Naive thymus-derived CD4-positive, alpha-beta T cell (primary cell): ENCODE measurements at regions of chr12 and their contacts with region 1.

Region 1: GRCh38 chr12:47397664-47398281 is 308.1 kb downstream of the RPAP3 start:
- DNase-seq: peak in 8 of 9 donors; percentile 33 to 71 (median 54)
- ATAC-seq: peak; percentile 86
- H3K4me3 ChIP-seq: peak overlapping the region; percentile 20
- H3K4me3 Mint-ChIP-seq: peak overlapping the region; percentile 29 to 73 (median 64)
- H3K27ac ChIP-seq: no peak overlapping the region
- H3K27ac Mint-ChIP-seq: peak overlapping the region; percentile 61 to 98 (median 91)
- H3K4me1 ChIP-seq: peaks cover 41% of the 10 kb centered on the region in 2 donors
- H3K4me1 Mint-ChIP-seq: peaks cover 28 to 76% (median 52%) of the 10 kb centered on the region in 7 donors
- H3K27me3 ChIP-seq: no peaks in the 10 kb centered on the region
- H3K27me3 Mint-ChIP-seq: no peaks in the 10 kb centered on the region

Region 2: GRCh38 chr12:47147739-47148138 is 250.0 kb before region 1 on chr12:
- CTCF ChIA-PET with region 1: no interaction called
- POLR2A ChIA-PET with region 1: interaction called, 3 read pairs
- intact Hi-C with region 1: loop called in 1 of 2 experiments (anchors 5 kb)
- DNase-seq: no peak
- ATAC-seq: no peak
- H3K4me3 ChIP-seq: no peak overlapping the region
- H3K4me3 Mint-ChIP-seq: no peak overlapping the region
- H3K27ac ChIP-seq: no peak overlapping the region
- H3K27ac Mint-ChIP-seq: peak overlapping the region in 2 of 9 donors; percentile 24 to 86
- H3K4me1 ChIP-seq: peaks cover 0 to 11% of the 10 kb centered on the region in 2 donors
- H3K4me1 Mint-ChIP-seq: peaks cover 14 to 50% (median 36%) of the 10 kb centered on the region in 7 donors
- H3K27me3 ChIP-seq: no peaks in the 10 kb centered on the region
- H3K27me3 Mint-ChIP-seq: no peaks in the 10 kb centered on the region

Region 3: DNA sequence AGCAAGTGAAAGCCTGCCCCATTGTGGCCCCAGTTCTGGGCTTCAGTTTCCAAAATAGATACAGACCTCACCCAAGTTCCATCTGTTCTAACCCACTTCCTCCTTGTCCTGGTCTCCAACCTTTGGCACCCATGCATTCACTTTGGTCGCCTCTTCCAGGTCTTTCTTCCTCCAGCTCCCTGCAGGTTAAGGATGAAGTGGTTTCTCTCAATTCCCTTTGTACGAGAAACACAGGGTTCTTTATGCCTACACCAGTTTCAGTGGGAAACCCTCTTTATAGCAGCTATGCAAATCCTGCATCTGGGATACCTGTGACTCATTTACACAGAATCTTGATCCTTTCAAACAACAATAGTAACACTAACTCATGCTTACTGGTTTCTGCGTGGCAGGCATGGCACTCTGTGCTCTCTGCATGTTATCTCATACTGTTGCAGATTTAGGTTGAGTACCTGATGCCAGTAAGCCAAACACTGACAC is 207.5 kb before region 1 on chr12:
- CTCF ChIA-PET with region 1: interaction called, 13 read pairs
- POLR2A ChIA-PET with region 1: interaction called, 6 read pairs
- intact Hi-C with region 1: loop called (anchors 1 to 2 kb)
- DNase-seq: no peak
- ATAC-seq: no peak
- H3K4me3 ChIP-seq: no peak overlapping the region
- H3K4me3 Mint-ChIP-seq: peak overlapping the region; percentile 42 to 87 (median 76)
- H3K27ac ChIP-seq: peak overlapping the region; percentile 61
- H3K27ac Mint-ChIP-seq: peak overlapping the region; percentile 81 to 98 (median 93)
- H3K4me1 ChIP-seq: peaks cover 52 to 77% of the 10 kb centered on the region in 2 donors
- H3K4me1 Mint-ChIP-seq: peaks cover 69 to 98% (median 93%) of the 10 kb centered on the region in 7 donors
- H3K27me3 ChIP-seq: no peaks in the 10 kb centered on the region
- H3K27me3 Mint-ChIP-seq: no peaks in the 10 kb centered on the region

Region 4: DNA sequence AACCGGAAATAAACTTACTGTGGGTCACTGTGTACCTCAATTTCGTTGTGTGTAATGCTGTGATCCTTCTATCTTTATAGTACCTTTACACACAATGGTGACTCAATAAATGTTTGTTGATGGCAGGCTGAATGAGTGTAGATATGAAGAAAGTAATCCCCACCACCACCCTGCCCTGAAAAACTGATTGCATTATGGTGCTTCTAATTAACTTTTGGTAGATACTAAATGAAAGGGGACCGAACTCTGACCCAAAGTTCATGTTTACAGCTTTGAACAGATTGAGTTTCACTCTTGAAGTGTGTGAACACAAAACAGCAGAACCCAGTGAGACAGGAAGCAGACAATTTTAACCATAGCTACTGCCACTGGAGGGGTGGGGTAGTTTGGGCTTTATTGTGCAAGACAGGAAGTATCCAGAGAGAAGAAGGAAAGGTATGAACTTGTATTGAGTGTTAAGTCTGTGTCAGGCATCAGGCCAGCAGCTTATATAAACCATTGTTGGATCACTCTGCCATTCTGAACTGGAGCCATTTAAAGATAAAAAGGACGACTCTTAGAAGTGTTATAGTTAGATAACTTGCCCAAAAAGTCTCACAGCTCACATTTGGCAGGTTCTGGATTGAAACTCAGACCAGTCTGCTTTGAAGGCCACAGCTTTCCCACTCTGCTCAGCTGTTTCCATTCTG is 121.0 kb before region 1 on chr12:
- CTCF ChIA-PET with region 1: interaction called, 6 read pairs
- POLR2A ChIA-PET with region 1: interaction called, 8 read pairs
- intact Hi-C with region 1: loop called in 1 of 2 experiments (anchors 1 kb)
- DNase-seq: peak; percentile 12 to 89 (median 84)
- ATAC-seq: peak; percentile 97
- H3K4me3 ChIP-seq: peak overlapping the region; percentile 31
- H3K4me3 Mint-ChIP-seq: peak overlapping the region; percentile 51 to 83 (median 74)
- H3K27ac ChIP-seq: peak overlapping the region; percentile 69
- H3K27ac Mint-ChIP-seq: peak overlapping the region; percentile 90 to 98 (median 92)
- H3K4me1 ChIP-seq: peaks cover 28 to 73% of the 10 kb centered on the region in 2 donors
- H3K4me1 Mint-ChIP-seq: peaks cover 42 to 97% (median 90%) of the 10 kb centered on the region in 7 donors
- H3K27me3 ChIP-seq: no peaks in the 10 kb centered on the region
- H3K27me3 Mint-ChIP-seq: no peaks in the 10 kb centered on the region

Region 5: DNA sequence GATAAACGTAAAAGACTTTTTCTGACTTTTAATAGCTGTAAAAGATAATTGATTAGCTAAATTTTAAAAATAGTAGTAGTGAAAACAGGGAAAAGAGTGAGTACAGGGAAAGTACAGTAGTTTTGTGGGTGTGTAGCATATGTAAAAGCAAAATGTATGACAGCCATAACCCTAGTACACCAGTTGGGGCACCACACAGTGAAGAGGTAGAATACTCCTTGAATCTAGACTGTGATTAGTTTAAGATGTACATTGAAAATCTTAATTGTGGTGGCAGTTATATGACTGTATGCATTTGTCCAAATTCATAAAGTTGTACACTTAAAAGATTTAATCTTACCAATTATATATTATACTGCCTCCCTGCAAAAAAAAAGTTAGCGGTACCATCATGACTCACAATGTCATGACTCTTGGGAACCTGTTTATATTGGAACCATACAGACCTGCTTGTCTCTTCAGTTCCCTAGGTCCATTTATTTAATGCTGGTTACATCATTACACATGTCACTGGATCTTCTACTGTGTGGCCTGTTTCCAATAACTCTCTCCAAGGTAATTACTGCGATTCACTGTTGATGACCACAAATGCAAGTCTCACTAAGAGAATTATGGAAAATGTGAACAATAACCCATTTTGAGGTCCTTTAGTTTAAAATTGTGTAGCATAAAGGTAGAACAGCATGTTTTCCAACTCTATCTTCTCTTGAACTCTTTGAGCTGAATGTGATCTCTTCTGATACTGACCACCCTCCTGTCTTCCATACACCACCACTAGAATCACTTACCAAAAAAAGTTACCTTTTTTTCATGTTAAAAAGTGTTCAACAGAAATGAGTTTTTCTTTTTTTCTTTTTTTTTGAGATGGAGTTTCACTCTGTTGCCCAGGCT is 53.9 kb before region 1 on chr12:
- CTCF ChIA-PET with region 1: interaction called, 4 read pairs
- POLR2A ChIA-PET with region 1: no interaction called
- intact Hi-C with region 1: loop called in 1 of 2 experiments (anchors 10 kb)
- DNase-seq: no peak
- ATAC-seq: no peak
- H3K4me3 ChIP-seq: no peak overlapping the region
- H3K4me3 Mint-ChIP-seq: no peak overlapping the region
- H3K27ac ChIP-seq: no peak overlapping the region
- H3K27ac Mint-ChIP-seq: no peak overlapping the region
- H3K4me1 ChIP-seq: no peaks in the 10 kb centered on the region
- H3K4me1 Mint-ChIP-seq: peaks cover 0 to 23% (median 19%) of the 10 kb centered on the region in 7 donors
- H3K27me3 ChIP-seq: no peaks in the 10 kb centered on the region
- H3K27me3 Mint-ChIP-seq: no peaks in the 10 kb centered on the region